Activated B cell treated with CpG ODN at 0.5 μM for 24 hours (primary cell): ENCODE measurements at regions of chr18 and their contacts with region 1.

Region 1: GRCh38 chr18:3665780-3666525 is 216.0 kb downstream of the TGIF1 start:
- DNase-seq: peak; percentile 51
- ATAC-seq: peak; percentile 84
- H3K4me3 Mint-ChIP-seq: no peak overlapping the region
- H3K27ac Mint-ChIP-seq: no peak overlapping the region
- H3K4me1 Mint-ChIP-seq: peaks cover 21% of the 10 kb centered on the region
- H3K27me3 Mint-ChIP-seq: no peaks in the 10 kb centered on the region
- CTCF ChIP-seq: peak; percentile 83

Region 2: DNA sequence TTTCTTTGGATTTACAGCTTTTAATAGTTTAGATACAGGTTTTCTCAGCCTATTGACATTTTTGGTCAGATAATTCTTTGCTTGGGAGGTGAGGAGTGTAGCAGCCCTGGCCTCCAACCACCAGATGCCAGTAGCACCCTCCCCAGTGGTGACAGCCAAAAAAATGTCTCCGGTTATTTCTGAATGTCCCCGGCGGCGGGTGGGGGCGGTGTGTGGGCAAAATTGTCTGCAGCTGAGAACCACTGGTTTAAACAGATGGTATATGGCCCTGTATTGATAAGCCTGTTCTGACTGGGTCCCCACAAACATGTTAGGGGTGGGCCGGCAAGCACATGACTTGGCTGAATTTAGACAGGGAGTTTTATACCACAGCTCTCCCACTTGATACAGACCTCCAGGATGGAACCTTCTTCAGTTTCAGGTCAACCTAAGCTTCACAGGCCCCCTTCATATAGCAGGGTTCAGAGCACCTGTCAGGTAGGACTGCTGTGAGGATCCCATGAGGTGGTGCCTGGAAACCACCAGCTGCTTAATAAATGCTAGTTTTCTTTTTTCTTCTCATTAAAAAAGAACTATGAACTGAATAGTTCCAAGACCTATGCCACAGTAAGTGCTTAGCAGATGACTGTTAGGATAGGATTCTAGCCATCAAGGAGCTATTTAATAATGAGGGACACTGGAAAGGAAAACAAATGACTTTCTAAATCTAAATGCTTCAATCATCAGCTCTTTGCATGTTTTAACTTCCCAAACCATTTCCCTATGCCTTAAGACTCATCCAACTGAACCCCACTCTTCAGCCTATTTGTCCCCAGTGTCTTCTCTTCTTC is 671.1 kb before region 1 on chr18:
- CTCF ChIA-PET with region 1: interaction called, 21 read pairs
- POLR2A ChIA-PET with region 1: no interaction called
- intact Hi-C with region 1: loop called (anchors 2 kb)
- DNase-seq: peak; percentile 47
- ATAC-seq: peak; percentile 97
- H3K4me3 Mint-ChIP-seq: peak overlapping the region; percentile 48
- H3K27ac Mint-ChIP-seq: peak overlapping the region; percentile 50
- H3K4me1 Mint-ChIP-seq: peaks cover 34% of the 10 kb centered on the region
- H3K27me3 Mint-ChIP-seq: no peaks in the 10 kb centered on the region
- CTCF ChIP-seq: no peak

Region 3: GRCh38 chr18:3297025-3297984 is 368.6 kb before region 1 on chr18:
- CTCF ChIA-PET with region 1: interaction called, 41 read pairs
- POLR2A ChIA-PET with region 1: no interaction called
- intact Hi-C with region 1: loop called (anchors 1 kb)
- DNase-seq: peak; percentile 82
- ATAC-seq: peak; percentile 99
- H3K4me3 Mint-ChIP-seq: peak overlapping the region; percentile 95
- H3K27ac Mint-ChIP-seq: peak overlapping the region; percentile 83
- H3K4me1 Mint-ChIP-seq: peaks cover 11% of the 10 kb centered on the region
- H3K27me3 Mint-ChIP-seq: peaks cover 6% of the 10 kb centered on the region
- CTCF ChIP-seq: no peak

Region 4: DNA sequence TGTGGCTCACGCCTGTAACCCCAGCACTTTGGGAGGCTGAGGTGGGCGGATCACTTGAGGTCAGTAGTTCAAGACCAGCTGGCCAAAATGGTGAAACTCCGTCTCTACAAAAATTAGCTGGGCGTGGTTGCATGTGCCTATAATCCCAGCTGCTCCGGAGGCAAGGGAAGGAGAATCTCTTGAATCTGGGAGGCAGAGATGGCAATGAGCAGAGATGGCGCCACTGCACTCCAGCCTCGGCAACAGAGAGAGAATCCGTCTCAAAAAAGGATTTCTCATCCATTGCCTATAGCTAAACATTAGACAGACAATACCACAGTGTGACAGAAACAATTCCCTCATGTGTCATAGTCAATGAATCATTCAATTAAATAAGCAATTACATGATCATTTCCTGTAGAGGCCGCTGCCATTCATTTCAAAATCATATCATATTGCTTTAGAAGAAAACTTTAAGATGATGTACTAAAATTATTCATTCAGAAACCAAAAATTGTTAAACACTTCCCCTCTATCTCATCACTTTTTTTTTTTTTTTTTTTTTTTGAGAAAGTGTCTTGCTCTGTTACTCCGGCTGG is 285.5 kb before region 1 on chr18:
- CTCF ChIA-PET with region 1: interaction called, 4 read pairs
- POLR2A ChIA-PET with region 1: no interaction called
- intact Hi-C with region 1: loop called (anchors 1 kb)
- DNase-seq: no peak
- ATAC-seq: peak; percentile 66
- H3K4me3 Mint-ChIP-seq: no peak overlapping the region
- H3K27ac Mint-ChIP-seq: no peak overlapping the region
- H3K4me1 Mint-ChIP-seq: peaks cover 21% of the 10 kb centered on the region
- H3K27me3 Mint-ChIP-seq: no peaks in the 10 kb centered on the region
- CTCF ChIP-seq: no peak

Region 5: GRCh38 chr18:3604498-3605408 is 61.2 kb before region 1 on chr18:
- CTCF ChIA-PET with region 1: interaction called, 21 read pairs
- POLR2A ChIA-PET with region 1: interaction called, 13 read pairs
- intact Hi-C with region 1: no loop called
- DNase-seq: no peak
- ATAC-seq: peak; percentile 73
- H3K4me3 Mint-ChIP-seq: no peak overlapping the region
- H3K27ac Mint-ChIP-seq: no peak overlapping the region
- H3K4me1 Mint-ChIP-seq: peaks cover 3% of the 10 kb centered on the region
- H3K27me3 Mint-ChIP-seq: no peaks in the 10 kb centered on the region
- CTCF ChIP-seq: no peak